ENCODE measurements at regions of chr3 and their contacts with region 1.

Region 1: GRCh38 chr3:141913150-141913811 is 36.8 kb downstream of the ATP1B3 start:
- DNase-seq: peak; percentile 56 to 66 (median 64)
- H3K4me3 ChIP-seq: no peak overlapping the region
- H3K4me3 Mint-ChIP-seq: no peak overlapping the region
- H3K27ac ChIP-seq: no peak overlapping the region
- H3K27ac Mint-ChIP-seq: peak overlapping the region in 5 of 7 donors; percentile 3 to 85 (median 52)
- H3K4me1 ChIP-seq: no peaks in the 10 kb centered on the region
- H3K4me1 Mint-ChIP-seq: peaks cover 0 to 10% (median 3%) of the 10 kb centered on the region in 4 donors
- H3K27me3 ChIP-seq: no peaks in the 10 kb centered on the region
- H3K27me3 Mint-ChIP-seq: no peaks in the 10 kb centered on the region

Region 2: GRCh38 chr3:141575879-141576743 is 337.2 kb before region 1 on chr3:
- CTCF ChIA-PET with region 1: interaction called, 6 read pairs
- POLR2A ChIA-PET with region 1: no interaction called
- intact Hi-C with region 1: loop called (anchors 1 kb)
- DNase-seq: peak in 4 of 5 donors; percentile 16 to 27 (median 23)
- H3K4me3 ChIP-seq: no peak overlapping the region
- H3K4me3 Mint-ChIP-seq: peak overlapping the region; percentile 10 to 70 (median 50)
- H3K27ac ChIP-seq: no peak overlapping the region
- H3K27ac Mint-ChIP-seq: peak overlapping the region; percentile 60 to 91 (median 72)
- H3K4me1 ChIP-seq: peaks cover 7% of the 10 kb centered on the region
- H3K4me1 Mint-ChIP-seq: peaks cover 7 to 8% (median 8%) of the 10 kb centered on the region in 4 donors
- H3K27me3 ChIP-seq: no peaks in the 10 kb centered on the region
- H3K27me3 Mint-ChIP-seq: no peaks in the 10 kb centered on the region

Region 3: DNA sequence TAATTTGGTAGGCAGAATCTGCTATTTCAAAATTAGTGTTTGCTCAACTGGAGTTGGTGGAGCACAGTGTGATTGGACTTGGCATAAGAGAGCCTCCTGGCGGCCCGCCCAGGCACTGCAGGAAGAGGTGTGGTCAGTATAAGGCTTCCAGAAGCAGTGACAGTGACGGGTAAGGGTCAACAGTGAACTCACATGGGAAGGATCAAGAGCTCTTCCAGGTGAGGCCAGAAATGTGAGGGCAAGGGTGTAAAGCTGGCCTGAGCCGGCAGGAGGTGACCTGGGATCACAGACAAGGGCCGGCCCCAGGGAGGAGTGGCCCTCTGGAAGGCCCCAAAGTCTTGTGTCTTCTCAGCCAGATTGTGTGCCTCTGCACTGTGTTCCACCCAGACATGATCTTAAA is 268.4 kb before region 1 on chr3:
- CTCF ChIA-PET with region 1: interaction called, 11 read pairs
- POLR2A ChIA-PET with region 1: no interaction called
- intact Hi-C with region 1: loop called (anchors 1 kb)
- DNase-seq: peak; percentile 49 to 58 (median 56)
- H3K4me3 ChIP-seq: no peak overlapping the region
- H3K4me3 Mint-ChIP-seq: peak overlapping the region in 1 of 8 donors; percentile 1
- H3K27ac ChIP-seq: no peak overlapping the region
- H3K27ac Mint-ChIP-seq: peak overlapping the region in 2 of 7 donors; percentile 23 to 61
- H3K4me1 ChIP-seq: no peaks in the 10 kb centered on the region
- H3K4me1 Mint-ChIP-seq: peaks cover 0 to 3% (median 1%) of the 10 kb centered on the region in 4 donors
- H3K27me3 ChIP-seq: no peaks in the 10 kb centered on the region
- H3K27me3 Mint-ChIP-seq: no peaks in the 10 kb centered on the region

Region 4: DNA sequence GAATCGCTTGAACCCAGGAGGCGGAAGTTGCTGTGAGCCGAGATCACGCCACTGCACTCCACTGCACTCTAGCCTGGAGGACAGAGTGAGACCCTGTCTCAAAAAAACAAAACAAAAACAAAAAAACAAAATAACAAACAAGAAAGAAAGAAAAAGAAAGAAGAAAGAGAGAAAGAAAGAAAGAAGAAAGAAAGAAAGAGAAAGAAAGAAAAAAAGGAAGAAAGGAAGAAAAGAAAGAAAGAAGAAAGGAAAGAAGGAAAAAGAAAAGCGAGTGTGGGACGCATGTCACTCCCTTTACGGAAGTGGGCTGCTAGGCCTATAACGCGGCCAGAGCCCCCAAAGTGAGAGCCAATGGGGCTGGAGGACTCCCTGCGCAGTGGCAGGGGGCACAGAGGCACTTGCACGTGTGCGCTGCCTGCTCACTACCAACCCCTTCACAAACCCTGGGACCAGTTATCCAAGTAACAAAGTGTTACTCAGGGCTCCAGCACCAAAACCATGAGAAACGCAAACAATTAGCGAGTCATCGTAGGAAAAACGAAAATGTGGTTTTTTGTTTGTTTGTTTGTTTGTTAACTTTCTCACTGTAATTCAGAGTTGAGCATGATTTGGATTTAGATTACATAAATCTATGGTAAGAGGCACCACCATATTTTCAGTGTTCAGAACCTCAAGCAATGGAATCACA is 77.6 kb before region 1 on chr3:
- CTCF ChIA-PET with region 1: no interaction called
- POLR2A ChIA-PET with region 1: no interaction called
- intact Hi-C with region 1: no loop called
- DNase-seq: no peak
- H3K4me3 ChIP-seq: no peak overlapping the region
- H3K4me3 Mint-ChIP-seq: no peak overlapping the region
- H3K27ac ChIP-seq: no peak overlapping the region
- H3K27ac Mint-ChIP-seq: no peak overlapping the region
- H3K4me1 ChIP-seq: no peaks in the 10 kb centered on the region
- H3K4me1 Mint-ChIP-seq: no peaks in the 10 kb centered on the region
- H3K27me3 ChIP-seq: no peaks in the 10 kb centered on the region
- H3K27me3 Mint-ChIP-seq: no peaks in the 10 kb centered on the region

Region 5: GRCh38 chr3:141875374-141875892 is 37.8 kb before region 1 on chr3:
- CTCF ChIA-PET with region 1: interaction called, 22 read pairs
- POLR2A ChIA-PET with region 1: interaction called, 5 read pairs
- intact Hi-C with region 1: loop called (anchors 1 kb)
- DNase-seq: peak; percentile 75 to 84 (median 78)
- H3K4me3 ChIP-seq: peak overlapping the region; percentile 82 to 86
- H3K4me3 Mint-ChIP-seq: peak overlapping the region; percentile 85 to 96 (median 92)
- H3K27ac ChIP-seq: peak overlapping the region; percentile 95
- H3K27ac Mint-ChIP-seq: peak overlapping the region; percentile 93 to 99 (median 95)
- H3K4me1 ChIP-seq: peaks cover 28% of the 10 kb centered on the region
- H3K4me1 Mint-ChIP-seq: peaks cover 19 to 39% (median 30%) of the 10 kb centered on the region in 4 donors
- H3K27me3 ChIP-seq: no peaks in the 10 kb centered on the region
- H3K27me3 Mint-ChIP-seq: peaks cover 0 to 1% of the 10 kb centered on the region in 2 donors

Region 6: GRCh38 chr3:141887051-141887450 is 26.2 kb before region 1 on chr3:
- CTCF ChIA-PET with region 1: interaction called, 12 read pairs
- POLR2A ChIA-PET with region 1: no interaction called
- intact Hi-C with region 1: no loop called
- DNase-seq: no peak
- H3K4me3 ChIP-seq: no peak overlapping the region
- H3K4me3 Mint-ChIP-seq: no peak overlapping the region
- H3K27ac ChIP-seq: no peak overlapping the region
- H3K27ac Mint-ChIP-seq: no peak overlapping the region
- H3K4me1 ChIP-seq: peaks cover 3% of the 10 kb centered on the region
- H3K4me1 Mint-ChIP-seq: peaks cover 17 to 29% (median 22%) of the 10 kb centered on the region in 4 donors
- H3K27me3 ChIP-seq: no peaks in the 10 kb centered on the region
- H3K27me3 Mint-ChIP-seq: no peaks in the 10 kb centered on the region

Region 7: DNA sequence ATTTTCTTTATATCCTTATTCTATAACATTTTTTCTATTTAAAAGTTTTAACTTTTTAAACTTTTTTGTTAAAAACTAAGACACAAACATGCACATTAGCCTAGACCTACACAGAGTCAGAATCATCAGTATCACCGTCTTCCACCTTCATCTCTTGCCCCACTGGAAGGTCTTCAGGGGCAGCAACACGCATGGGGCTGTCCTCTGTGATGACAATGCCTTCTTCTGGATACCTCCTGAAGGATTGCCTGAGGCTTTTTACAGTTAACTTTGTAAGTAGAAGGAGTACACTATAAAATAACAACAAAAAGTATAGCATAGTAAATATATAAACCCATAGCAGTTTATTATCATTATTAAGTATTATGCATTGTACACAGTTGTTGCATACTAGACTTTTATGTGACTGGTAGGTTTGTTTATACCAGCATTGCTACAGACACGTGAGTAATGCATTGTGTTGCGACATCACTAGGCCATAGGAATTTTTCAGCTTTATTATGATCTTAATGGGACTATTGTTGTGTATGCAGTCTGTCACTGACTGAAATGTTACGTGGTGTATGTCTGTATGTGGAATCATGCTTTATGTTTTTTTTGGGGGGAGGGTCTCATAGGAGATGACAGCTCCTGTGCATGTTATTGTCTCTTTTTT is 18.6 kb before region 1 on chr3:
- CTCF ChIA-PET with region 1: interaction called, 12 read pairs
- POLR2A ChIA-PET with region 1: no interaction called
- intact Hi-C with region 1: no loop called
- DNase-seq: no peak
- H3K4me3 ChIP-seq: no peak overlapping the region
- H3K4me3 Mint-ChIP-seq: no peak overlapping the region
- H3K27ac ChIP-seq: no peak overlapping the region
- H3K27ac Mint-ChIP-seq: peak overlapping the region in 1 of 7 donors; percentile 75
- H3K4me1 ChIP-seq: peaks cover 6% of the 10 kb centered on the region
- H3K4me1 Mint-ChIP-seq: peaks cover 11 to 17% (median 11%) of the 10 kb centered on the region in 4 donors
- H3K27me3 ChIP-seq: no peaks in the 10 kb centered on the region
- H3K27me3 Mint-ChIP-seq: no peaks in the 10 kb centered on the region

Region 8: GRCh38 chr3:141901914-141902313 is 11.4 kb before region 1 on chr3:
- CTCF ChIA-PET with region 1: interaction called, 14 read pairs
- POLR2A ChIA-PET with region 1: no interaction called
- intact Hi-C with region 1: no loop called
- DNase-seq: no peak
- H3K4me3 ChIP-seq: no peak overlapping the region
- H3K4me3 Mint-ChIP-seq: no peak overlapping the region
- H3K27ac ChIP-seq: no peak overlapping the region
- H3K27ac Mint-ChIP-seq: peak overlapping the region in 2 of 7 donors; percentile 15 to 53
- H3K4me1 ChIP-seq: no peaks in the 10 kb centered on the region
- H3K4me1 Mint-ChIP-seq: peaks cover 2 to 12% (median 6%) of the 10 kb centered on the region in 4 donors
- H3K27me3 ChIP-seq: no peaks in the 10 kb centered on the region
- H3K27me3 Mint-ChIP-seq: no peaks in the 10 kb centered on the region